Activated T-helper 1 cell treated with anti-CD3 and anti-CD28 coated beads, Interleukin-12 subunit alpha, Interleukin-12 subunit beta, Interleukin-2, Interleukin-4 antibody, amounts not matched to agents 30 ng/mL and 10 ng/mL and 1 ng/mL, durations not matched to agents 14 hours and 24 hours and 36 hours (primary cell): ENCODE measurements at regions of chr1 and their contacts with region 1.

Region 1: GRCh38 chr1:233790662-233791375 is 113.7 kb upstream of the SLC35F3 start:
- DNase-seq: peak; percentile 8
- H3K4me3 Mint-ChIP-seq: no peak overlapping the region
- H3K27ac Mint-ChIP-seq: no peak overlapping the region
- H3K4me1 Mint-ChIP-seq: no peaks in the 10 kb centered on the region
- H3K27me3 Mint-ChIP-seq: peaks cover 4% of the 10 kb centered on the region

Region 2: DNA sequence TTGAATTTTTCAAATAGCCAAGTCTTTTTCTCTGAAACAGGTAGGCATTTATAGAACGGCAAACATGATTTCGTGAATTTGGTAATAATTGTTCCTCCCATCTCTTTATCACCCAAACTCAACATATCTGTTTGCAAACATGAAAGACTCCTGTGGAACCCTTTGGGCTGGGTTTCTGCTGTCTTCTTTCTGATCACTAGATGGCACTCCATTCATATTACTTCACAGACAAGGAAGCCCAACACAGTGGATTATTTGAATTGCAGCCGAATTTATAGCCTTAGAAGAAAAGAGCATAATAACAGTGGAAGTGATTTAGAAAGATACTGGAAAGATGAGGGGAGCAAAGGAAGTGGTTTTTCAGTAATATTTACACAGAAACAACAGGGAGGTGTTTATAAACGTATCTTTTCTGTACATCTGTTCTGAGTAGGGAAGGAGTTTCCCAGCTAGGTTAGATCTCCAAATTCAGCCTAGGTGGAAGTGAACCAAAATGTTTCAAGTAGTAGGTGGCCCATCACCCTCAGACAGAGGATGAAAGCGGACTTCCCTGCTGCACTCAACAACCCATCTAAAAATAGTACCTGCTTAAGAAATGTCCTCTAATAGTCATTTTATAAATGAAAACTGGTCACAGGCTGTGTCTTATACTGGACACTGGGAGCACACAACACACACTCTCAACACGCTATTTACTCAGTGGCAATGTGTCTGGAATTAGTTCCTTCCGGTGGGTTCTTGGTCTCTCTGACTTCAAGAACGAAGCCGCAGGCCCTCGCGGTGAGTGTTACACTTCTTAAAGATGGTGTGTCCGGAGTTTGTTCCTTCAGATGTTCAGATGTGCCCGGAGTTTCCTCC is 395.7 kb before region 1 on chr1:
- intact Hi-C with region 1: loop called (anchors 1 kb)
- DNase-seq: peak; percentile 17
- H3K4me3 Mint-ChIP-seq: no peak overlapping the region
- H3K27ac Mint-ChIP-seq: no peak overlapping the region
- H3K4me1 Mint-ChIP-seq: no peaks in the 10 kb centered on the region
- H3K27me3 Mint-ChIP-seq: peaks cover 8% of the 10 kb centered on the region

Region 3: DNA sequence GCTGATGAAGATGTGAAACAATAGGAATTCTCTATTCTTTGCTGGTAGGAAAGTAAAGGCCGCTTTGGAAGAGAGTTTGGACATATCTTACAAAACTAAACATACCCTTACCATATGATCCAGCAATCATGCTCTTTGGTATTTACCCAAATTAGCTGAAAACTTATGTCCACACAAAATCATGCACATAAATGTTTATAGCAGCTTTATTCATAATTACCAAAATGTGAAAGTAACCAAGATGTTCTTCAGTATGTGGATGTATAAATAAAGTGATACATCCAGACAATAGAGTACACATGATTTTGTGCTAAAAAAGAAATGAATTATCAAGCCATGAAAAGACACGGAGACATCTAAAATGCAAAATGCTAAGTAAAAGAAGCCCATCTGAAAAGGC is 15.0 kb after region 1 on chr1:
- intact Hi-C with region 1: no loop called
- DNase-seq: no peak
- H3K4me3 Mint-ChIP-seq: no peak overlapping the region
- H3K27ac Mint-ChIP-seq: no peak overlapping the region
- H3K4me1 Mint-ChIP-seq: no peaks in the 10 kb centered on the region
- H3K27me3 Mint-ChIP-seq: no peaks in the 10 kb centered on the region